Aorta (tissue), 5 donors: ENCODE measurements at regions of chr17 and their contacts with region 1.

Region 1: GRCh38 chr17:8753976-8754440 is 4.3 kb downstream of the SPDYE4 start:
- DNase-seq: no peak
- ATAC-seq: no peak
- H3K4me3 ChIP-seq: no peak overlapping the region
- H3K27ac ChIP-seq: no peak overlapping the region
- H3K4me1 ChIP-seq: no peaks in the 10 kb centered on the region
- H3K27me3 ChIP-seq: no peaks in the 10 kb centered on the region

Region 2: DNA sequence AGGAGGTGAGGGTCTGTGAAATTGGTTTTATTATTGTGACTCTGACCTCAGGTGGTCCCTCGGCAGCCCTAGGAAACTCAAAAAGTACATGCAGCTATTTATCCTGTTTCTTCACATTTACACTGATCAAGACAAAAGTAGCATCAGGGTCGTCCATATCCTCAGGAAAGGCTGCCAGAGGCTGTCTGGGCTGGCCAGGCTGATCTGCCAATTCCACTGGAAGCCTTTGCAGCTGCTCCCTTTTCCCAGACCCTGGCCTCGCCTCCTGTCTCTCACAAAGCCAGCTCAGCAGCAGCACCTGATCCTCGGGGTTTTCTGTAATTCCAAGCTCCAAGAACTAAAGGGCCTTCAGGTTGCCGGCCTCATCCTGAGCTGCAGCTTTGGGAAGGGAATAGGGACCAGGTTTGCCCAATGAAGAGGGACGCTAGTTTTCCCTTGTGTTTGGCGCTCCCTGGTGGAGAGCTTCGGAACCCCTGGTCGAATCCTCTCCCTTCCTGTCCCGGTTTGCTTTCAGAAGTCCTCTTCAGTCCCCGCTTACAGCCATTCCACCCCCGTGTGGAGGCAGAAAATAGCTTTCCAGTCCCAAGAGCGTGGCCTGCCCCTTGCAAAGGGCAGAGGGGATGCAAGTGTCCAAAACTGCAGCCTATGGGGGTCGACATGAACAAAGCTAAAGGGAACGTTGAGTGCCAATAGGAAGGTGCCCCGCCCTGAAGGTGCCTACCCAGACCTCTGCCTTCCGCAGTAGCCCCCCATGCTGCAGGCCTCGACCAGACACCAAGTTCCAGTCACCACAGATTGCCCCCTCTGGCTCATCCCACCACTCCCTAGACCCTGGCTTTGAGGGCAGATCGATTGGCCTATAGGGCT is 31.8 kb after region 1 on chr17:
- intact Hi-C with region 1: loop called in 1 of 2 experiments (anchors 2 kb)
- DNase-seq: peak; percentile 90 to 96
- ATAC-seq: peak; percentile 91
- H3K4me3 ChIP-seq: no peak overlapping the region
- H3K27ac ChIP-seq: peak overlapping the region in 1 of 2 donors; percentile 61
- H3K4me1 ChIP-seq: no peaks in the 10 kb centered on the region
- H3K27me3 ChIP-seq: no peaks in the 10 kb centered on the region